Esophagus squamous epithelium (tissue), 5 donors: ENCODE measurements at regions of chr1 and their contacts with region 1.

Region 1: DNA sequence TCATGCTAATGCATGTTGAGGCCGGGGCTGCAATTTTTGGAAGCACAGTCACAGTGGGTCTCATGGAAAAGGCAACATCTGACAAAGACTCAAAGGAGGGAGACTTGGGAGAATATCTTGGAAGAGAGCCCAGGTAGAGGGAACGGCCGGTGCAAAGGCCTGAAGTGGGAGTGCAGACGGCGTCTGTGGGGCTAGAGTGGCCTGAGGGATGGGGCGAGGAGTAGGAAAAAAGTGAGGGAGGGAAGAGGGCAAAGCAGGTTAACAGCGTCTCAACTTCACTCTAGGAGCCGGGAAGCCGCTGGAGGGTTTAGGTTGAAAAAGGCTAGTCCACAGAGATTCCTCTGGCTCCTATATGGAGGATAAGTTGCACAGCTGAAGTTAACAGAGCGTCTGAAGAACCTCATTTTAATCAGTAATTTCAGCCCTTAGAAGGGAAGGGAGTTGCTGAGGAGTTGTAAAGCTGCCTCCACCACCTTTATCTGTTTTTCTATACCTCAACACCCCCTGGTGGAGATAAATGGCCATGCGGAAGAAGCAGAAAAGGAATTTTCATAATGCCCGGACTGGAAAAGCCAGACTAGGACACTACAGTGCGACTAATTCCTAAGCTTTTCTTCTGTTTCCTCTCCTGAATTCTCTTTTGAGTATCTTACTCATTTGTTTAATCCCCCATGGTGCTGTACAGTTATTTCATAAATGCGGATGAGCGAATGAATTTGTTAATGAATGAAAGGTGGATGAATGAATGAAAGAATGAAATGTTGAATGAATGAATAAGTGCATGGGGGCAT is 78.7 kb upstream of the ZNF281 start:
- DNase-seq: no peak
- H3K4me3 ChIP-seq: no peak overlapping the region
- H3K27ac ChIP-seq: no peak overlapping the region
- H3K4me1 ChIP-seq: peaks cover 3 to 12% (median 5%) of the 10 kb centered on the region in 3 donors
- H3K27me3 ChIP-seq: peaks cover 0 to 45% (median 0%) of the 10 kb centered on the region in 4 donors
- CTCF ChIP-seq: peak; percentile 69 to 91 (median 82)
- POLR2A ChIP-seq: no peak

Region 2: GRCh38 chr1:200139661-200140250 is 348.8 kb before region 1 on chr1:
- intact Hi-C with region 1: loop called (anchors 10 kb)
- DNase-seq: no peak
- H3K4me3 ChIP-seq: no peak overlapping the region
- H3K27ac ChIP-seq: no peak overlapping the region
- H3K4me1 ChIP-seq: no peaks in the 10 kb centered on the region
- H3K27me3 ChIP-seq: no peaks in the 10 kb centered on the region
- CTCF ChIP-seq: peak; percentile 34 to 70 (median 50)
- POLR2A ChIP-seq: no peak

Region 3: DNA sequence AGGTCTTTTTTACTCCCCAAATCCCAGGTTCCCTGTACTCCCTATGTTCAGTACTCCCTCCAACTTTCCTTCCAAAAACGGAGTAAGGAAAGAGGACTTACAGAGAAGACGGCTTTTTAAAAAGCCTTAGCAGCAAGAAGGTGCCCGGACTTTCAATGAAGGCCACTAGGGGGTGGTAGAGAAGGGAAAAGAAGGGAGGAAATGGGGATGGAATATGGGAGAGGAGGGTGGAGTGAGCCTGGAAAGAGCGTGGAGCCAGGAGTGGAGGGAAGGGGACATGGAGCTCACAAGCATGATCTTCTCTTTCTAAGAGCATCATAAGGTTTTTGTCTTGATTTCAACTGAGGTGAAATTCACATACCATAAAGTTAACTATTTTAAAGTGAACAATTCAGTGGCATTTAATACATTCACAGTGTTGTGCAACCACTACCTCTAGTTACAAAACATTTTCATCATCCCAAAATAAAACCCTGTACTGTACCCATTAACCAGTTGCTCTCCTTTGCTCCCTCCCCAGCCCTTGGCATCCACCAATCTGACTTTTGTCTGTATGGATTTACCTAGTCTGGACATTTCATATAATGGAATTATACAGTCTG is 208.7 kb before region 1 on chr1:
- intact Hi-C with region 1: loop called (anchors 5 kb)
- DNase-seq: no peak
- H3K4me3 ChIP-seq: no peak overlapping the region
- H3K27ac ChIP-seq: no peak overlapping the region
- H3K4me1 ChIP-seq: no peaks in the 10 kb centered on the region
- H3K27me3 ChIP-seq: peaks cover 0 to 11% (median 0%) of the 10 kb centered on the region in 4 donors
- CTCF ChIP-seq: peak; percentile 24 to 72 (median 64)
- POLR2A ChIP-seq: no peak